ENCODE measurements at regions of chrX and their contacts with region 1.

Region 1: DNA sequence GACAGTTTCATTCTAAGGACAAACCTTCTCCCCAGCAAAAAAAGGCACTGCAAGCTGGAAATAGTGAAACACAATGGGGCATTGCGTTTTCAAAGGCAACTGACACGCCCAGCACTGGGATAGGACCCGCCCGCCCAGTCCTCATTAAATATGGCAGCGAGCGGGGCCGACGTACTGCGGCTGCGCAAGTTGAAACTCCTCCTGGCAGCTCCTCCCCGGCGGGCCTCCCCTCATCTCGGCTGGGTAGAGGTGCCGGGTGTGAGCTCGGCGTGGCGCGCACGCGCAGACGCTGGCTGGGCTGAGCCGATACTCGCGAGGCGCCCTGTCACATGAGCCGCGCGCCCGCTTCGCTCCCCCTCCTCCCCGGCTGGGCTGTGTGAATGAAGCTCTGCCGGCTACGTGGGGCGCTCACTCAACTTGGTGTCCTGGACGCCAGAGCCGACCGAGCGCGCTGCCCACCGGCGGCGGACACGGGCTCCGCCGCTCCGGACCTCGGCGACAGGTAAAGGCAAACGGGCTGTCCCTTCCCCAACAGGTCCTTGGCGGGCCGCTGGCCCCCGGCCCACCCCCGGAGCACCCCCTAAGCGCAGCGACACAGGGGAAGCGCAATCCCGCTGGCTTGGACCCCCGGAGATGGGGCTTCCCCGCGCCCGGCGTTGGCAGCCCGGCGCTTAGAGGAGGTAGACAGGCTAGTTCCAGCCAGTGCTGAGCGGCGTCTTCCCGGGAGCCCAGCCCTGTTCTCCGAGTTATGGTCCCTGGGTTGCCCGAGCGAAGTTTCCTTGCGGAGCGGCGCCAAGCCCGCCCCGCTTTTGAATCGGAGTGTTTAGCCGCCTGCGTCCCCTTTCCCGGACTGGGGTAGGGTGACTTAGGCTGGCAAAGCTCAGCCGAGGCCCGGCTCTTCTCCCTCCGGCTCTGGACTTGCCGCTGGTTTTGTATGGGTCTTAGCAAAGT is at the start of gene CLCN5:
- DNase-seq: peak; percentile 85 to 97 (median 92)
- ATAC-seq: peak; percentile 92
- H3K4me3 ChIP-seq: peak within 1 kb of the TSS; percentile 65 to 74
- H3K4me3 Mint-ChIP-seq: peak within 1 kb of the TSS; percentile 82
- H3K27ac ChIP-seq: peak within 1 kb of the TSS; percentile 39 to 47
- H3K27ac Mint-ChIP-seq: no peak within 1 kb of the TSS
- H3K4me1 ChIP-seq: peaks cover 12% of the 10 kb centered on the region
- H3K4me1 Mint-ChIP-seq: peaks cover 8% of the 10 kb centered on the region
- H3K27me3 ChIP-seq: no peaks in the 10 kb centered on the region
- H3K27me3 Mint-ChIP-seq: no peaks in the 10 kb centered on the region
- CTCF ChIP-seq: no peak
- total RNA-seq, gene CLCN5: 0.53 to 0.87 TPM

Region 2: GRCh38 chrX:48451708-48452107 is 1470.9 kb before region 1 on chrX:
- CTCF ChIA-PET with region 1: no interaction called
- POLR2A ChIA-PET with region 1: no interaction called
- intact Hi-C with region 1: no loop called
- DNase-seq: no peak
- ATAC-seq: no peak
- H3K4me3 ChIP-seq: no peak overlapping the region
- H3K4me3 Mint-ChIP-seq: no peak overlapping the region
- H3K27ac ChIP-seq: no peak overlapping the region
- H3K27ac Mint-ChIP-seq: no peak overlapping the region
- H3K4me1 ChIP-seq: no peaks in the 10 kb centered on the region
- H3K4me1 Mint-ChIP-seq: no peaks in the 10 kb centered on the region
- H3K27me3 ChIP-seq: no peaks in the 10 kb centered on the region
- H3K27me3 Mint-ChIP-seq: no peaks in the 10 kb centered on the region
- CTCF ChIP-seq: no peak

Region 3: DNA sequence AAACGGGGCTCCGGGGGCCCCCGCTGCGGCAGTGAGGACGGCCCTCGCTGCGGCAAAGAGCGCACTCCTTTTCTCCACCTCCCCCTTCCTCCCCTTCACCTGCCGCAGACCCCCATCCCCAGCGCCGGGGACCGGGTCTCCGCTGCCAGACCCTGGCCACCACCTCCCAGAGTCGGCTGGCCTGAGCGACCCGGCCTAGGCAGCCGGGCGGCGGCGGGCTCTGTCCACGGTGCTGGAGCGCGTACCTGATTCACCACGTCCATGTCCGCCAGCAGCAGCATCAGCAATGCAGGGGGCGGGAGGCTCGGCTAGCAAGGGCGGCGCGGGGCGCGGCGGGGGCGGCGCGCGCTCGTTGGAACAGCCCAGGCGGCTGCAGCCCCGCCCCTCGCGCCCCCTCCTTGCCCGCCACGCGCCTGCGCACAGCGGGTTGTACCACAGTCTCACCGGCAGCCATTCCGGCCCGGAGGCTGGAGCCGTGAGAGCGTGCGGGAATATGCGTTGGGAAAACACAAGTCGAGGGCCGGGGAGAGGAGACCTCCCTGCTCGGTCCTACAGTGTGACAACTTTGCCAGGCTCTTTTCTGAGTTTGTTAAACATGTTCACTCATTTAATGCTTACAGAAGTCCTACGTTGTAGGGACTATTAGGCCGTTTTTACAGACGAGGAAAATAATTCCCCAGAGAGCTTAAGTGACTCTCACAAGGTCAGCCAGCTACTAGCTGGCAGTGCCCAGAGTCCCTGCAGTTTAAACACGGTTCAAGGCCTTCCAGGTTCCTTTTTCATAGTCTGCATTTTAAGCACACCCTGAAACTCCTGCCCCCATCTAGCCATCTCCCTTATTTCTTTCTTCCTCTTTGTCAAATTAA is 722.4 kb before region 1 on chrX and contains the start of gene SYP:
- CTCF ChIA-PET with region 1: no interaction called
- POLR2A ChIA-PET with region 1: no interaction called
- intact Hi-C with region 1: loop called in 1 of 2 experiments (anchors 5 kb)
- DNase-seq: peak; percentile 71 to 92 (median 88)
- ATAC-seq: peak; percentile 99
- H3K4me3 ChIP-seq: peak within 1 kb of the TSS; percentile 39 to 50
- H3K4me3 Mint-ChIP-seq: peak within 1 kb of the TSS; percentile 72
- H3K27ac ChIP-seq: peak within 1 kb of the TSS; percentile 53 to 54
- H3K27ac Mint-ChIP-seq: peak within 1 kb of the TSS; percentile 82
- H3K4me1 ChIP-seq: no peaks in the 10 kb centered on the region
- H3K4me1 Mint-ChIP-seq: peaks cover 14% of the 10 kb centered on the region
- H3K27me3 ChIP-seq: no peaks in the 10 kb centered on the region
- H3K27me3 Mint-ChIP-seq: no peaks in the 10 kb centered on the region
- CTCF ChIP-seq: no peak
- total RNA-seq, gene SYP: 0.44 to 0.65 TPM

Region 4: GRCh38 chrX:49878834-49879659 is 43.5 kb before region 1 on chrX and contains the start of gene USP27X:
- CTCF ChIA-PET with region 1: interaction called, 28 read pairs
- POLR2A ChIA-PET with region 1: no interaction called
- intact Hi-C with region 1: loop called (anchors 1 kb)
- DNase-seq: peak; percentile 55 to 92 (median 79)
- ATAC-seq: peak; percentile 91
- H3K4me3 ChIP-seq: peak within 1 kb of the TSS; percentile 58 to 66
- H3K4me3 Mint-ChIP-seq: peak within 1 kb of the TSS; percentile 84
- H3K27ac ChIP-seq: peak within 1 kb of the TSS; percentile 37 to 55
- H3K27ac Mint-ChIP-seq: peak within 1 kb of the TSS; percentile 75
- H3K4me1 ChIP-seq: peaks cover 24% of the 10 kb centered on the region
- H3K4me1 Mint-ChIP-seq: peaks cover 30% of the 10 kb centered on the region
- H3K27me3 ChIP-seq: no peaks in the 10 kb centered on the region
- H3K27me3 Mint-ChIP-seq: no peaks in the 10 kb centered on the region
- CTCF ChIP-seq: peak; percentile 40
- total RNA-seq, gene USP27X: 2.6 to 2.7 TPM

Region 5: GRCh38 chrX:49884290-49884862 is 38.2 kb before region 1 on chrX:
- CTCF ChIA-PET with region 1: interaction called, 28 read pairs
- POLR2A ChIA-PET with region 1: no interaction called
- intact Hi-C with region 1: loop called (anchors 1 kb)
- DNase-seq: peak; percentile 13 to 72 (median 54)
- ATAC-seq: no peak
- H3K4me3 ChIP-seq: no peak overlapping the region
- H3K4me3 Mint-ChIP-seq: no peak overlapping the region
- H3K27ac ChIP-seq: no peak overlapping the region
- H3K27ac Mint-ChIP-seq: no peak overlapping the region
- H3K4me1 ChIP-seq: peaks cover 20% of the 10 kb centered on the region
- H3K4me1 Mint-ChIP-seq: peaks cover 28% of the 10 kb centered on the region
- H3K27me3 ChIP-seq: no peaks in the 10 kb centered on the region
- H3K27me3 Mint-ChIP-seq: peaks cover 2% of the 10 kb centered on the region
- CTCF ChIP-seq: peak; percentile 62

Region 6: GRCh38 chrX:49910344-49910743 is 12.2 kb before region 1 on chrX:
- CTCF ChIA-PET with region 1: interaction called, 12 read pairs
- POLR2A ChIA-PET with region 1: interaction called, 3 read pairs
- intact Hi-C with region 1: no loop called
- DNase-seq: peak in 1 of 9 experiments; percentile 27
- ATAC-seq: peak; percentile 42
- H3K4me3 ChIP-seq: no peak overlapping the region
- H3K4me3 Mint-ChIP-seq: no peak overlapping the region
- H3K27ac ChIP-seq: no peak overlapping the region
- H3K27ac Mint-ChIP-seq: peak overlapping the region; percentile 19
- H3K4me1 ChIP-seq: peaks cover 8% of the 10 kb centered on the region
- H3K4me1 Mint-ChIP-seq: peaks cover 17% of the 10 kb centered on the region
- H3K27me3 ChIP-seq: no peaks in the 10 kb centered on the region
- H3K27me3 Mint-ChIP-seq: no peaks in the 10 kb centered on the region
- CTCF ChIP-seq: no peak

Region 7: GRCh38 chrX:49934148-49934547 is 11.6 kb after region 1 on chrX:
- CTCF ChIA-PET with region 1: no interaction called
- POLR2A ChIA-PET with region 1: no interaction called
- intact Hi-C with region 1: no loop called
- DNase-seq: no peak
- ATAC-seq: no peak
- H3K4me3 ChIP-seq: no peak overlapping the region
- H3K4me3 Mint-ChIP-seq: no peak overlapping the region
- H3K27ac ChIP-seq: no peak overlapping the region
- H3K27ac Mint-ChIP-seq: no peak overlapping the region
- H3K4me1 ChIP-seq: no peaks in the 10 kb centered on the region
- H3K4me1 Mint-ChIP-seq: no peaks in the 10 kb centered on the region
- H3K27me3 ChIP-seq: no peaks in the 10 kb centered on the region
- H3K27me3 Mint-ChIP-seq: no peaks in the 10 kb centered on the region
- CTCF ChIP-seq: no peak

Region 8: GRCh38 chrX:49970674-49971073 is 48.1 kb after region 1 on chrX:
- CTCF ChIA-PET with region 1: no interaction called
- POLR2A ChIA-PET with region 1: no interaction called
- intact Hi-C with region 1: no loop called
- DNase-seq: no peak
- ATAC-seq: no peak
- H3K4me3 ChIP-seq: no peak overlapping the region
- H3K4me3 Mint-ChIP-seq: no peak overlapping the region
- H3K27ac ChIP-seq: no peak overlapping the region
- H3K27ac Mint-ChIP-seq: no peak overlapping the region
- H3K4me1 ChIP-seq: no peaks in the 10 kb centered on the region
- H3K4me1 Mint-ChIP-seq: no peaks in the 10 kb centered on the region
- H3K27me3 ChIP-seq: no peaks in the 10 kb centered on the region
- H3K27me3 Mint-ChIP-seq: no peaks in the 10 kb centered on the region
- CTCF ChIP-seq: no peak

Region 9: GRCh38 chrX:51420610-51421009 is 1498.0 kb after region 1 on chrX:
- CTCF ChIA-PET with region 1: no interaction called
- POLR2A ChIA-PET with region 1: no interaction called
- intact Hi-C with region 1: loop called in 1 of 2 experiments (anchors 10 kb)
- DNase-seq: peak in 5 of 9 experiments; percentile 11 to 62 (median 36)
- ATAC-seq: peak; percentile 29
- H3K4me3 ChIP-seq: no peak overlapping the region
- H3K4me3 Mint-ChIP-seq: no peak overlapping the region
- H3K27ac ChIP-seq: no peak overlapping the region
- H3K27ac Mint-ChIP-seq: no peak overlapping the region
- H3K4me1 ChIP-seq: no peaks in the 10 kb centered on the region
- H3K4me1 Mint-ChIP-seq: peaks cover 3% of the 10 kb centered on the region
- H3K27me3 ChIP-seq: no peaks in the 10 kb centered on the region
- H3K27me3 Mint-ChIP-seq: no peaks in the 10 kb centered on the region
- CTCF ChIP-seq: peak; percentile 20